AG04450 (cell line): ENCODE measurements at regions of chr6 and their contacts with region 1.

Region 1: DNA sequence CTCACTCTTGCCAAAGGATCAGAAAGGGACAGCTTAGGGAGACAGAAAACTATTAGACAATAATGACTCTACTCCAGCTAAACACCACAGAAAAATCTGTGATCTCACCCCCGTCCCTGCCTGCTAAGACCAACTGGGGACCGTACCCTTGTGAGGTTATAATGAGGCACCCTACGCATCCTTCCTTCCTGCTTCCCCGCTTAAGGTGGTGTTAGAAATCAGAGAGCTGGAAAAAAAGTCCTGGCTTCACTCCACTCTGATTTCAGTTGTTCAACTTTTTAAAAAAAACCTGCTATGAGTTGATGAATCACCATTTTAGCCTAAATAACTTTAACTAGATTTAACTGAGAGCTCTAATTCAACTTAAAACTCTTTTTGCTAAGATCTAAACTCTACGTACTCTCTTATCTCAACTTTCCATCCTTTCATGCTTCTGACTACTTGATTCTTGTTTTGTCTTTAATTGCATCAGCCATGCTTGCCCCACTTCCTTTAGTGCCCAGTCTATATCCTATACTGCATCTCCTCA is 35.8 kb upstream of the TMEM14A start:
- DNase-seq: no peak
- H3K4me3 ChIP-seq: no peak overlapping the region
- H3K27ac ChIP-seq: peak overlapping the region; percentile 71
- H3K27me3 ChIP-seq: no peaks in the 10 kb centered on the region
- CTCF ChIP-seq: no peak

Region 2: DNA sequence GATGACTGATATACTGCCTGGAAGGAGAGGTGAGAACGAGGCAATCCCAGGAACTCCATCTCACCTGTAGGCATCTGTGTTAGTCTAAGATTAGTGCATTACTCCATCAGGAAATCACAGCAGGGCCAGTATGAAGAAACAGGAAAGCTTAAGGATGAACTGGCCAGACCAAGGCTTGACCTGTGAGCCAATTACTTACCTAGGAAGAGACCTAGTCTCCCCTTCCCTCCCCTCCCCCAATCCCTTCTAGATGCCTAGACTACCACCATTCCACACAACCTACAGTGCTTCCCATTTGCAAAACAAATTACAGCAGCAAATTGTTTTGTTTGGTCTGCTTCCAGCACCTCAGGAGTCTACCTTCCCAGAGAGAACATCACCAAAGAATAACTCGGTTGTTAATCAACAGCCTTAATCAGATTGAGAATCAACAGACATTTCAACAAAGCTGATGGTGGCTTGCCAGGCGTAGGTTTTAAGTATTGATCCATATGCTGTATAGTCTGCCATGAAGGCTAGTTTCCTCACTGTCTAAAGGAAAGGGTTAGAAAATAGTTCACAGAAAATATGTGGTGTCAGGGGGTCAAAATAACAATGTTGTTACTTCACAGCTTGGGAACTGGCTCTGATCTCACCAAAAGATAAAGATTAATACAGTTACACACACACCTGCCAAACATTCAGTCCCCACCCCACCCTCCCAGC is 557.8 kb before region 1 on chr6:
- CTCF ChIA-PET with region 1: no interaction called
- POLR2A ChIA-PET with region 1: no interaction called
- DNase-seq: no peak
- H3K4me3 ChIP-seq: no peak overlapping the region
- H3K27ac ChIP-seq: no peak overlapping the region
- H3K27me3 ChIP-seq: no peaks in the 10 kb centered on the region
- CTCF ChIP-seq: no peak

Region 3: GRCh38 chr6:52620906-52621190 is 14.3 kb before region 1 on chr6:
- CTCF ChIA-PET with region 1: interaction called, 10 read pairs
- POLR2A ChIA-PET with region 1: no interaction called
- DNase-seq: no peak
- H3K4me3 ChIP-seq: no peak overlapping the region
- H3K27ac ChIP-seq: no peak overlapping the region
- H3K27me3 ChIP-seq: no peaks in the 10 kb centered on the region
- CTCF ChIP-seq: no peak